Panc1 (cell line): ENCODE measurements at regions of chr10 and their contacts with region 1.

Region 1: DNA sequence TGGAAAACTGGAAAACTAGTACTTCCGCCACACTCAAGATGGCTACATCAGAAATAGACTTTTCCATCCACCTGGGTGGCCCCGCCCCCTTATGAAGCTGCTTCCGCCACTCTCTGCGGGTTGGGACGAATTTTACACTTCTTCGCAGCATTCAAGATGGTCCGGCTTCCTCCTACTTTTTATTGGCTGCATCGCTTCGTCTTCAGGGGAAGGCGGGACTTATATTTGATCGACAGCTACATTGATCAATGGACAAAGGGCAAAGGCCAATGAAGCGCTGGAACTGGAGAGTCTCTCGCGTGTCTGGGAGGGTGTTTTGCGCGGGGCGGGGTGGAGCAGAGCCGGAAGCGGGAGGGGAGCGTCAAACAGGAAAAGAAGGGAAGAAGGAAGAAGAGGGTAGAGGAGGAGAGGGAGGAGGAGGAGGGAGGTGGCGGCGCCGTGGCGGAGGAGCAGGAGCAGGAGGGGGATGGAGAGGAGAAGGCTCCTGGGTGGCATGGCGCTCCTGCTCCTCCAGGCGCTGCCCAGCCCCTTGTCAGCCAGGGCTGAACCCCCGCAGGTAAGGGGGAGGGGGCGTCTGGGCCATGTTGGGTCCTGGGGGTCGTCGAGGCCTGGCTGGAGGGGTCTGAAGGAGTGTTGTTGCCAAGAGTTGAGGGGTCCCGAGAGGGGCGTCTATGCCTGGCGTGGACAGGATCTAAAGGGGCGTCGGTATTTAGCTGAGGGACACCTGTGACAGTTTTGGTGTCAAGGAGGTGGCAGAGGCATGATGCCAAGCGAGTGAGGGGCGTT is at the start of gene WBP1L:
- DNase-seq: peak; percentile 100
- ATAC-seq: peak; percentile 96
- H3K4me3 ChIP-seq: peak within 1 kb of the TSS; percentile 79 to 92
- H3K27ac ChIP-seq: peak within 1 kb of the TSS; percentile 95
- H3K4me1 ChIP-seq: peaks cover 24% of the 10 kb centered on the region
- H3K27me3 ChIP-seq: no peaks in the 10 kb centered on the region
- CTCF ChIP-seq: no peak
- total RNA-seq, gene WBP1L: 91.3 TPM

Region 2: GRCh38 chr10:102399217-102400089 is 344.3 kb before region 1 on chr10:
- CTCF ChIA-PET with region 1: no interaction called
- POLR2A ChIA-PET with region 1: no interaction called
- in situ Hi-C with region 1: no loop called
- intact Hi-C with region 1: no loop called
- DNase-seq: no peak
- ATAC-seq: peak; percentile 65
- H3K4me3 ChIP-seq: peak overlapping the region; percentile 41 to 42
- H3K27ac ChIP-seq: peak overlapping the region; percentile 72
- H3K4me1 ChIP-seq: peaks cover 45% of the 10 kb centered on the region
- H3K27me3 ChIP-seq: no peaks in the 10 kb centered on the region
- CTCF ChIP-seq: peak; percentile 100

Region 3: DNA sequence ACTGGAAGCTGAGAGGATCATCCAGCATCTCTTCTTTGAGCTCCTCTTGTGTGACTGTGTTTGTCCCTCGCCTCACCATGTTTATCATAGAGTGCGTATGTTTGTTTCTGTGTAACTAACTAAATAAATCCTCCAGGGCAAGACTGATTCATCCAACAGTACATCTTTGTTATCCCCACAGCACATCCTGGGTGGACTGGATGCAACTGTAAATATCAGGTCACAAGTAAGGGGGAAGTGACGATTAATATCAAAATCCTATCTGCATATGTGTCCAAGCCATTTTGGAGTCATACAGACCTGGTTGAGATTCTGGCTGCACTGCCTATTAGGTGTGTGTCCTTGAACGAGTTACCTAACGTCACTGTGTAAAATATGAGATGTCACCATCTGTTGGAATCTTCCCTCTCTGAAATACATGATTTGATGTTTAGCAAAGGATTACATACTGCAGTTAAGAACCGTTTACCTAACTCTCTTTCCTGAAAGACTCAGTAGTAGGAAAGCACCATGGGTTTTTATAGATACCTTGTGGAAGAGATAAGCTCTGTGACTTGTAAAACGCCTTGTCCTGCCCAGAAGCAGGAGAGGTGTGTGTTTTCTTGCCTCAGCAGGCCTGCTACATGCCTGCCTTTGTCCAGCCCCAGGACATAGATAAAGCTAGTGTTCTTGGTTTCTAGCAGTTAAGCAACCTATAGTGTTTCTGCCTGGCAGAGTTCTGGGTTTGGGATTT is 25.8 kb after region 1 on chr10:
- CTCF ChIA-PET with region 1: no interaction called
- POLR2A ChIA-PET with region 1: interaction called, 10 read pairs
- in situ Hi-C with region 1: no loop called
- intact Hi-C with region 1: no loop called
- DNase-seq: peak; percentile 92
- ATAC-seq: peak; percentile 90
- H3K4me3 ChIP-seq: no peak overlapping the region
- H3K27ac ChIP-seq: peak overlapping the region; percentile 91
- H3K4me1 ChIP-seq: peaks cover 82% of the 10 kb centered on the region
- H3K27me3 ChIP-seq: no peaks in the 10 kb centered on the region
- CTCF ChIP-seq: no peak

Region 4: DNA sequence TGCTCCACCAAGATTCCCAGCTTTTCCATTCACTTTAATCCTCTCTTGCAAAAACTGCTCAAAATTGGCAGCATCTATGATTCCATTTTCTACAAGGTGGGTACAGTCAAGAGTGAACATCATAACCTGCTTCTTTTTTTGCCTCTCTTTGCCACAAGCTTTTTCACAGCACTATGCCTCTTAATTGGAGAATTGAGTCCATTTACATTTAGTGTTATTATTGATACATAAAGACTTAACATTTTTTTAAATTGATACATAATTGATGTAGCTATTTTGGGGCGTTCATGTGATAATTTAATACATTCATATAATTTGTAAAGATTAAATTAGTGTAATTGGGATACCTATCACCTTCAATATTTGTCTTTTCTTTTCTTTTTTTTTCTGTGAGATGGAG is 144.3 kb after region 1 on chr10:
- CTCF ChIA-PET with region 1: no interaction called
- POLR2A ChIA-PET with region 1: no interaction called
- in situ Hi-C with region 1: no loop called
- intact Hi-C with region 1: no loop called
- DNase-seq: no peak
- ATAC-seq: no peak
- H3K4me3 ChIP-seq: no peak overlapping the region
- H3K27ac ChIP-seq: no peak overlapping the region
- H3K4me1 ChIP-seq: no peaks in the 10 kb centered on the region
- H3K27me3 ChIP-seq: no peaks in the 10 kb centered on the region
- CTCF ChIP-seq: no peak

Region 5: GRCh38 chr10:103284165-103284564 is 540.4 kb after region 1 on chr10:
- CTCF ChIA-PET with region 1: no interaction called
- POLR2A ChIA-PET with region 1: interaction called, 10 read pairs
- in situ Hi-C with region 1: no loop called
- intact Hi-C with region 1: no loop called
- DNase-seq: no peak
- ATAC-seq: no peak
- H3K4me3 ChIP-seq: no peak overlapping the region
- H3K27ac ChIP-seq: no peak overlapping the region
- H3K4me1 ChIP-seq: 0 out of 2 replicates have a peak, but pooled peaks cover 3% of the 10 kb centered on the region
- H3K27me3 ChIP-seq: peaks cover 21% of the 10 kb centered on the region
- CTCF ChIP-seq: no peak